Aorta (tissue), 5 donors: ENCODE measurements at regions of chr6 and their contacts with region 1.

Region 1: GRCh38 chr6:36678518-36679027 is at the start of gene CDKN1A:
- DNase-seq: peak; percentile 96
- ATAC-seq: peak; percentile 89
- H3K4me3 ChIP-seq: peak within 1 kb of the TSS; percentile 93 to 95
- H3K27ac ChIP-seq: peak within 1 kb of the TSS; percentile 98 to 99
- H3K4me1 ChIP-seq: no peaks in the 10 kb centered on the region
- H3K27me3 ChIP-seq: peaks cover 0 to 2% of the 10 kb centered on the region in 2 donors
- total RNA-seq, gene CDKN1A: 132 to 296 TPM

Region 2: DNA sequence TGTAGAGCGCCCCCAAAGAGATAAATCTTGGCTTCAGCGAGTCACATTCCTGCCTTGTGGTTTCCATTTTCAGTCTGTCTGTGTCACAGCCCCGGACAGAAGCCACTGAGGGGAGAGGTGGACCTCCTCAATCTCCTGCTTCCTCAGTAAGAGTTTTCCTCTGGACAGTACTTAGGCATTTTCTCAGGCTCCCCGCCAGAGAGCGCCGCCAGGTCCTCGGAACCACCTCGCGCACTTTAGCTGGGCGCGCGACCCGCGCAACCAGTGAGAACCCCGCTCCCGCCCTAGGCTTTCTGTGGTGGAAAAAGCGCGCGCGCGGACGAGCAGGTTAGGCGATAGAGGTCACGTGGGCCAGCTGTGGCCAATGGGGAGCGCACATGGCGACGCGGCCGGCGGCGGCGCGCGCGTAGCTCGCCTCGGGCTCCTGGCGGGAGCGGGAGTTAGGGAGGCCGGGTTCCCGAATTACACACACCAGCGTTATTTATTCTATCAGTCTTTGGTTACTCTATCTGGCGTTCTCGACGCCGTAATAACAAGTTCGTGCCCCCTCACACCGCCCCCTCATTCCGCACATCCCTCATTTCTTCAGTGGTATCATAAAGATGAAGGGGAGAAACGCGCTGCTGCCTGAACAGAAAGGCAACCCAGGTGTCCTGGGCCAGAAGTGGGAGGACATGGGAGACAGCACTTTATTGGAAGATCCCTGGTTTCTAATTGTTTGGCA is 255.3 kb before region 1 on chr6:
- intact Hi-C with region 1: loop called in 1 of 2 experiments (anchors 10 kb)
- DNase-seq: peak; percentile 99 to 100
- ATAC-seq: peak; percentile 99
- H3K4me3 ChIP-seq: peak overlapping the region; percentile 36 to 69
- H3K27ac ChIP-seq: peak overlapping the region; percentile 43 to 46
- H3K4me1 ChIP-seq: no peaks in the 10 kb centered on the region
- H3K27me3 ChIP-seq: no peaks in the 10 kb centered on the region

Region 3: GRCh38 chr6:36623547-36624459 is 54.8 kb before region 1 on chr6:
- intact Hi-C with region 1: loop called (anchors 1 to 2 kb)
- DNase-seq: peak; percentile 87 to 94
- ATAC-seq: peak; percentile 75
- H3K4me3 ChIP-seq: no peak overlapping the region
- H3K27ac ChIP-seq: no peak overlapping the region
- H3K4me1 ChIP-seq: peaks cover 0 to 4% of the 10 kb centered on the region in 2 donors
- H3K27me3 ChIP-seq: no peaks in the 10 kb centered on the region

Region 4: DNA sequence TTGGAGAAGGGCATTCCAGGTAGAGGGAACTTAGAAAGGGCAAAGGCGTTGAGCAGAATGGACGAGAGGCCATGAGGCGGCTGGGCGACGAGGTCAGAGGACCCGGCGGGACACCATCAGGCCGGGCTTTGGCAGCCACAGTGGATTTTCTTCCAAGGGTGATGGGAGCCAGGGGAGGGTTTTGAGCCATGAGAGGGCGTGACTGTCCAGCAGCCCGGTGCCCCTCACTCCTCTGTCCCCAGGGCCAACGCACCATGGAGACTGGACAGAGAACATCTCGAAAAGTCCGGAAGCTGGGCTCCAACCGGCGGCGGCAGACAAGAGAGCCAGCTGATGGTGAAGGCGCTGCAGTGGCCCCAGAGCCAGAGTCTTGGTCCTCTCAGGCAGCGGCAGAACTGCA is 25.4 kb after region 1 on chr6:
- intact Hi-C with region 1: no loop called
- DNase-seq: peak in 1 of 2 donors; percentile 59
- ATAC-seq: no peak
- H3K4me3 ChIP-seq: no peak overlapping the region
- H3K27ac ChIP-seq: no peak overlapping the region
- H3K4me1 ChIP-seq: no peaks in the 10 kb centered on the region
- H3K27me3 ChIP-seq: no peaks in the 10 kb centered on the region

Region 5: GRCh38 chr6:36731622-36732309 is 53.2 kb after region 1 on chr6:
- intact Hi-C with region 1: loop called in 1 of 2 experiments (anchors 5 kb)
- DNase-seq: peak in 1 of 2 donors; percentile 57
- ATAC-seq: no peak
- H3K4me3 ChIP-seq: no peak overlapping the region
- H3K27ac ChIP-seq: no peak overlapping the region
- H3K4me1 ChIP-seq: no peaks in the 10 kb centered on the region
- H3K27me3 ChIP-seq: no peaks in the 10 kb centered on the region